Naive thymus-derived CD4-positive, alpha-beta T cell (primary cell): ENCODE measurements at regions of chr1 and their contacts with region 1.

Region 1: GRCh38 chr1:247487057-247487456 is 29.2 kb upstream of the OR2B11 start:
- DNase-seq: peak in 7 of 9 donors; percentile 25 to 63 (median 40)
- ATAC-seq: peak; percentile 83
- H3K4me3 ChIP-seq: no peak overlapping the region
- H3K4me3 Mint-ChIP-seq: no peak overlapping the region
- H3K27ac ChIP-seq: no peak overlapping the region
- H3K27ac Mint-ChIP-seq: no peak overlapping the region
- H3K4me1 ChIP-seq: no peaks in the 10 kb centered on the region
- H3K4me1 Mint-ChIP-seq: no peaks in the 10 kb centered on the region
- H3K27me3 ChIP-seq: no peaks in the 10 kb centered on the region
- H3K27me3 Mint-ChIP-seq: peaks cover 5 to 16% (median 13%) of the 10 kb centered on the region in 5 donors

Region 2: DNA sequence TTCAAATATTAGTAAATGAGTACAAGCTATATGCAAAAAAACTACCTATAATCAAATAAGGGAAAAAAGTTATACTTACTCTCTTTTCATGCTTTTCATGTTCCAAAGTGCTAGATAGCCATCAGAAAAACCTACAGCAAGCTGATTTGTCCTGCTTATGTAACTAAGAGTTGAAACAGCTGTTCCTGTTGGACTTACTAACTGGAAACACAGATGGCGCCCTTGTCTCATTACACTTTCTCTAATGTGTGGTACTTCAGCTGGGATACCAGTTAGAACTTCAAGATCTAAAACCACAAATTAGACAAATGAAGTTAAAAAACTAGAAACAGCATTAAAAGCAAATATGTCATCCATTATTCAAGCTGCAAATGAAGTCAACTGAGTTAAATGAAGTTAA is 579.6 kb before region 1 on chr1:
- CTCF ChIA-PET with region 1: no interaction called
- POLR2A ChIA-PET with region 1: no interaction called
- intact Hi-C with region 1: loop called in 1 of 2 experiments (anchors 5 kb)
- DNase-seq: peak in 4 of 9 donors; percentile 6 to 32 (median 22)
- ATAC-seq: peak; percentile 58
- H3K4me3 ChIP-seq: no peak overlapping the region
- H3K4me3 Mint-ChIP-seq: no peak overlapping the region
- H3K27ac ChIP-seq: no peak overlapping the region
- H3K27ac Mint-ChIP-seq: peak overlapping the region in 2 of 9 donors; percentile 25 to 51
- H3K4me1 ChIP-seq: no peaks in the 10 kb centered on the region
- H3K4me1 Mint-ChIP-seq: peaks cover 2 to 28% (median 11%) of the 10 kb centered on the region in 7 donors
- H3K27me3 ChIP-seq: no peaks in the 10 kb centered on the region
- H3K27me3 Mint-ChIP-seq: no peaks in the 10 kb centered on the region

Region 3: DNA sequence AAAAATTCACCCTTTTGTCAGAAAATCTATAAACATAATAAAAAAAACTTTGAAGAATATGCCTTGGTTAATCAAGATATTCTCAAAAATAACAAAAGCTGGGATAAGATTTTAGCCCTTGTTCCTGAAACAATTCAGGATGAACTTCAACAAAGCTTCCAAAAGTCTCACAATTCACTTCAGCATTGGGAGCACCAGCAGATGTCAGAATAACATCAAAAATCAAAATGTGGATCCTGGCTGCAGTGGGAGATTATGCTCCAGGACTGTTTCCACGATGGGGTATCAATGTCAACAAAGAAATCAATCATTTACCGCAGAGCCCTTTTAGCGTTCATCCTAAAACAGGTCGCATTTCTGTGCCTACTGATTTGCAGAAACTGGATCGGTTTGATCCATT is 443.7 kb before region 1 on chr1:
- CTCF ChIA-PET with region 1: no interaction called
- POLR2A ChIA-PET with region 1: no interaction called
- intact Hi-C with region 1: loop called in 1 of 2 experiments (anchors 2 kb)
- DNase-seq: no peak
- ATAC-seq: no peak
- H3K4me3 ChIP-seq: no peak overlapping the region
- H3K4me3 Mint-ChIP-seq: no peak overlapping the region
- H3K27ac ChIP-seq: no peak overlapping the region
- H3K27ac Mint-ChIP-seq: no peak overlapping the region
- H3K4me1 ChIP-seq: no peaks in the 10 kb centered on the region
- H3K4me1 Mint-ChIP-seq: peaks cover 0 to 4% (median 0%) of the 10 kb centered on the region in 7 donors
- H3K27me3 ChIP-seq: no peaks in the 10 kb centered on the region
- H3K27me3 Mint-ChIP-seq: no peaks in the 10 kb centered on the region

Region 4: GRCh38 chr1:247373721-247374141 is 113.3 kb before region 1 on chr1:
- CTCF ChIA-PET with region 1: interaction called, 97 read pairs
- POLR2A ChIA-PET with region 1: interaction called, 3 read pairs
- intact Hi-C with region 1: loop called (anchors 1 kb)
- DNase-seq: peak; percentile 37 to 64 (median 48)
- ATAC-seq: peak; percentile 84
- H3K4me3 ChIP-seq: peak overlapping the region; percentile 46
- H3K4me3 Mint-ChIP-seq: peak overlapping the region in 9 of 10 donors; percentile 14 to 70 (median 58)
- H3K27ac ChIP-seq: no peak overlapping the region
- H3K27ac Mint-ChIP-seq: no peak overlapping the region
- H3K4me1 ChIP-seq: no peaks in the 10 kb centered on the region
- H3K4me1 Mint-ChIP-seq: peaks cover 0 to 10% (median 7%) of the 10 kb centered on the region in 7 donors
- H3K27me3 ChIP-seq: no peaks in the 10 kb centered on the region
- H3K27me3 Mint-ChIP-seq: peaks cover 4 to 19% (median 6%) of the 10 kb centered on the region in 5 donors

Region 5: GRCh38 chr1:247415423-247416361 is 71.4 kb before region 1 on chr1 and contains the start of gene NLRP3:
- CTCF ChIA-PET with region 1: interaction called, 3 read pairs
- POLR2A ChIA-PET with region 1: no interaction called
- intact Hi-C with region 1: loop called in 1 of 2 experiments (anchors 2 kb)
- DNase-seq: peak; percentile 23 to 63 (median 53)
- ATAC-seq: peak; percentile 86
- H3K4me3 ChIP-seq: peak within 1 kb of the TSS; percentile 53
- H3K4me3 Mint-ChIP-seq: peak within 1 kb of the TSS; percentile 75 to 95 (median 91)
- H3K27ac ChIP-seq: peak within 1 kb of the TSS; percentile 61
- H3K27ac Mint-ChIP-seq: peak within 1 kb of the TSS; percentile 4 to 92 (median 86)
- H3K4me1 ChIP-seq: peaks cover 20 to 33% of the 10 kb centered on the region in 2 donors
- H3K4me1 Mint-ChIP-seq: peaks cover 29 to 63% (median 45%) of the 10 kb centered on the region in 7 donors
- H3K27me3 ChIP-seq: no peaks in the 10 kb centered on the region
- H3K27me3 Mint-ChIP-seq: peaks cover 0 to 46% (median 0%) of the 10 kb centered on the region in 5 donors
- total RNA-seq, gene NLRP3: 0.70 to 90.6 (median 4.6) TPM

Region 6: DNA sequence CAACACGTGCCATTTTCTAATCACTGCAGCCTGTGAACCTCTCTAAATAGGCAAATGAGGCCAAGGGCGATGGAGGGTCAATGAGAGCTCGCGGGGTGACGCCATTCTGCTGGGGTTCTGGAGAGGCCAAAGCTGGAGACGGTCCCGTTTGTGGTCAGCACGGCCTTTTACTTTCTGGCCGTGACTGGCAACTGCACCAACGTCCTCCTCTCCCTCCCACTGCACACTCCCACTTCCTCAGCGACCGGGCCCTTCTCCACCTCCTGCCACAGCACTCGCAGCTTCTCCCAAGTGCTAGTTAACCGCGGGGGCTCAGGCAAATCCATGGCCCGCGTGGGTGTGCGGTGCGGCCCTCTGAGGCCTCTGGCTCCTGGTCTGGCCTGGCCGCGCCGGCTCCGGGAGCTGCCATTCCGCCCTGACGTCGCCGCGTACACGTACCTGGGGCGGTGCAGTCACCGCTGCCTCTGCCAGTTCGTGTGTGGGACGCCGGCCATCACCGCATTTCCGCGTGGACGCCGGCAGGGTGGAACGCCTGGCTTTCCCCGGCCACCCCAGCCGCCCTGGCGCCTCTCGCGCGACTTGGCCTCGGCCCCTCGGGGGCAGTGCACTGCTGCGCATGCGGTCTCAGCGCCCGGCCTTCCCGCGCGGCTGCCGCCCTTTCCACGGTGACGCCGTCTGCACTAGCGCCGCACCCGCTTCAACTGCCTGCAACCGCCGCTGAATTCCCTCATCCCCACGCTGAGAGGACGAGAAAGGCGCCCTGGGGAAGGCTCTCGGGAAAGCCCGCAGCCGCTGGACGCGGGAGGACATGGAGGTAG is 30.9 kb after region 1 on chr1:
- CTCF ChIA-PET with region 1: no interaction called
- POLR2A ChIA-PET with region 1: no interaction called
- intact Hi-C with region 1: no loop called
- DNase-seq: peak in 2 of 9 donors; percentile 1
- ATAC-seq: peak; percentile 27
- H3K4me3 ChIP-seq: no peak overlapping the region
- H3K4me3 Mint-ChIP-seq: peak overlapping the region in 6 of 10 donors; percentile 12 to 68 (median 50)
- H3K27ac ChIP-seq: no peak overlapping the region
- H3K27ac Mint-ChIP-seq: no peak overlapping the region
- H3K4me1 ChIP-seq: no peaks in the 10 kb centered on the region
- H3K4me1 Mint-ChIP-seq: no peaks in the 10 kb centered on the region
- H3K27me3 ChIP-seq: no peaks in the 10 kb centered on the region
- H3K27me3 Mint-ChIP-seq: peaks cover under 1 to 35% (median 17%) of the 10 kb centered on the region in 5 donors

Region 7: GRCh38 chr1:247740721-247741120 is 253.7 kb after region 1 on chr1:
- CTCF ChIA-PET with region 1: no interaction called
- POLR2A ChIA-PET with region 1: no interaction called
- intact Hi-C with region 1: no loop called
- DNase-seq: no peak
- ATAC-seq: no peak
- H3K4me3 ChIP-seq: no peak overlapping the region
- H3K4me3 Mint-ChIP-seq: no peak overlapping the region
- H3K27ac ChIP-seq: no peak overlapping the region
- H3K27ac Mint-ChIP-seq: no peak overlapping the region
- H3K4me1 ChIP-seq: no peaks in the 10 kb centered on the region
- H3K4me1 Mint-ChIP-seq: no peaks in the 10 kb centered on the region
- H3K27me3 ChIP-seq: no peaks in the 10 kb centered on the region
- H3K27me3 Mint-ChIP-seq: peaks cover 0 to 7% (median 4%) of the 10 kb centered on the region in 5 donors